PC-3 (cell line): ENCODE measurements at regions of chr3 and their contacts with region 1.

Region 1: DNA sequence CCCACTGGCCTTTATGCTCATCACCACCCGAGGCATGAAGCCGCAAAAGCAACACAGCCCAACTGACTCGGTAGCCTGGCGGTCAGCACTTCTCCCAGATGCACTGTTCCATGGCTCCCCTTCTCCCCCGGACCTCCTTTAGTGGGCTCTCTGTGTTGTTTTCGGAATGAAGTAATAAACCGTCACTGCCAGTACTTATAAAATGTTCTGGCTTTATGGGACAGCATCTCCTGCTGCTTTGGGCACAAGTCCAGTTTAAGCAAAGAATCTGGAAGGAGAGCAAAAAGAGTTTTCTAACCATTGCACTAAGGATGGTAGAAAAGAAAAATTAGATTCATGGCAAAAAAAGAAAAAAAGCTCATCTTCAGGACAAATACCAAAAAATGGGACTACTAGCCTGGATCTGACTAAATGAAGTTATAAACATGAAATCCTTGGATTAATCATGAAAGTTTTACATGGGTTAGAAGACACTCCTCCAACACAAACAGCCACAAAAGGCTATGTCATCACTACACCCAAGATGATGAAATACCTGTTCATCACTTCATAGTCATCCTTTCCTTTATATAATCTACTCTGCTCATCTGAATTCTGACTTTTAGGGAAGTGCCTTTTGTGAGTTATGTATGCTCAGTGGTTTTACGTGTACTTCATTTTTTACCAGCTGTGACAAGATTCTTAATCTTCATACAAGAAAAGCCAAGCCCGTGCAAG is 89.5 kb upstream of the UBE2E2 start:
- DNase-seq: peak; percentile 89
- ATAC-seq: peak; percentile 68
- H3K4me3 ChIP-seq: peak overlapping the region; percentile 33; the same call in 1 of the 2 replicates
- H3K27ac ChIP-seq: peak overlapping the region; percentile 64
- H3K4me1 ChIP-seq: peaks cover 44% of the 10 kb centered on the region
- H3K27me3 ChIP-seq: 0 out of 2 replicates have a peak, but pooled peaks cover under 1% of the 10 kb centered on the region
- CTCF ChIP-seq: no peak

Region 2: GRCh38 chr3:23002836-23003741 is 110.5 kb before region 1 on chr3:
- CTCF ChIA-PET with region 1: no interaction called
- POLR2A ChIA-PET with region 1: no interaction called
- intact Hi-C with region 1: loop called (anchors 10 kb)
- DNase-seq: peak; percentile 50
- ATAC-seq: no peak
- H3K4me3 ChIP-seq: no peak overlapping the region
- H3K27ac ChIP-seq: no peak overlapping the region
- H3K4me1 ChIP-seq: peaks cover 46% of the 10 kb centered on the region
- H3K27me3 ChIP-seq: no peaks in the 10 kb centered on the region
- CTCF ChIP-seq: no peak

Region 3: DNA sequence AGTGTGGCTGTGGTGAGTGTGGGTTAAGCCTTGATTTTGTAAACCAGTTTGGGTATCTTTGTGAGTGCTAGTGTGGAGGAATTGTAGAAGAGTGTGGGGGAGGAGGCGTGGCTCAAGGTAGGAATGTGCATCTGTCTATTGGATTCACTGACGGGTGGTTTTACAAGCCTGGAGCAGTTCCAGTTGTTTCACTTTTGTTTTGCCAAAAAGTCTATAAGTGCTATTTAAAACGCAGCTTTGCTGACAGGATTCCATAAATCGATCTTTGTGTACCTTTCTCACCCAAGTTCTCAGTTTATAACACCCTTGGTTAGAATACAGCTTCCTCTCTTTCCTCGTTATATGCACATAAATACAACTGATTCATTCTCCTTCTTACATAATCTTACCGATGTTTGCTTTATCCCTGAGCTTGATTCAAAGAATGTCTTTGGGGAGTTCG is 33.7 kb before region 1 on chr3:
- CTCF ChIA-PET with region 1: no interaction called
- POLR2A ChIA-PET with region 1: no interaction called
- intact Hi-C with region 1: loop called (anchors 1 kb)
- DNase-seq: peak; percentile 86
- ATAC-seq: peak; percentile 85
- H3K4me3 ChIP-seq: peak overlapping the region; percentile 57
- H3K27ac ChIP-seq: no peak overlapping the region
- H3K4me1 ChIP-seq: peaks cover 13% of the 10 kb centered on the region
- H3K27me3 ChIP-seq: no peaks in the 10 kb centered on the region
- CTCF ChIP-seq: no peak

Region 4: GRCh38 chr3:23095017-23095416 is 18.6 kb before region 1 on chr3:
- CTCF ChIA-PET with region 1: no interaction called
- POLR2A ChIA-PET with region 1: no interaction called
- intact Hi-C with region 1: loop called (anchors 1 kb)
- DNase-seq: peak; percentile 97
- ATAC-seq: peak; percentile 91
- H3K4me3 ChIP-seq: no peak overlapping the region
- H3K27ac ChIP-seq: no peak overlapping the region
- H3K4me1 ChIP-seq: peaks cover 23% of the 10 kb centered on the region
- H3K27me3 ChIP-seq: no peaks in the 10 kb centered on the region
- CTCF ChIP-seq: no peak

Region 5: DNA sequence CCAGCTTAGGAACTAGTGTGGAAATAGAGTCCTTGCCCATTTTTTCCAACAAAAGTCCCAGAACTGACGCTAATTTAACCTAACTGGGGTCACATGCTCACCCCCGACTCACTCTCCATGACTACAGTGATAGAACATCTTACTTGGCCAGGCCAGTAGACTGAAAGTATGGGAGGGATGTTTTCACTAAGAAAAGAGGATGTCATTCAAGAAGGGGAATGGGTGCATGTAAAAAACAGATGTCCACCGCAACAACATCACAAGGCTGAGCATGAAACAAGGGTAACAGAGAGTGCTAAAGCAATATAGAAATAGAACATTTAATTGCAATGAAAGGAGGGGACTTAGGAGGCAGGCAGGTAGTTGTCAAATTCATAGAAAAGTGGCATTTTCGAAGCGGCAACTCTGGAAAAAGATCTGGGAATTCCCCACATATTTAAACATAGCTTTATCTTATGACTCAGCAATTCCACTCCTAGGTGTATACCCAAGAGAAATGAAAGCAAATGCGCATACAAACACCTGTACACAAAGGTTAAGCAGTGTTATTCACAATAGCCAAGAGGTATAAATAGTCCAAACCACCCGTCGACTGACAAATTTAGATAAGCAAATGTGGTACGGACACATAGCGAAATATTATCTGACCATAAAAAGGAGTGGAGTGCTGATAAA is 48.4 kb after region 1 on chr3:
- CTCF ChIA-PET with region 1: no interaction called
- POLR2A ChIA-PET with region 1: no interaction called
- intact Hi-C with region 1: loop called (anchors 2 kb)
- DNase-seq: peak; percentile 73
- ATAC-seq: peak; percentile 67
- H3K4me3 ChIP-seq: peak overlapping the region; percentile 38
- H3K27ac ChIP-seq: peak overlapping the region; percentile 37
- H3K4me1 ChIP-seq: peaks cover 43% of the 10 kb centered on the region
- H3K27me3 ChIP-seq: no peaks in the 10 kb centered on the region
- CTCF ChIP-seq: no peak